ENCODE measurements at regions of chr9 and their contacts with region 1.

Region 1: GRCh38 chr9:77725820-77726219 is 77.7 kb upstream of the GNA14 start:
- DNase-seq: no peak
- H3K4me3 Mint-ChIP-seq: peak overlapping the region; percentile 5
- H3K27ac Mint-ChIP-seq: peak overlapping the region; percentile 71
- H3K4me1 Mint-ChIP-seq: peaks cover 33% of the 10 kb centered on the region
- H3K27me3 Mint-ChIP-seq: no peaks in the 10 kb centered on the region

Region 2: GRCh38 chr9:77605449-77606220 is 120.2 kb before region 1 on chr9:
- intact Hi-C with region 1: no loop called
- DNase-seq: no peak
- H3K4me3 Mint-ChIP-seq: no peak overlapping the region
- H3K27ac Mint-ChIP-seq: no peak overlapping the region
- H3K4me1 Mint-ChIP-seq: no peaks in the 10 kb centered on the region
- H3K27me3 Mint-ChIP-seq: peaks cover 13% of the 10 kb centered on the region

Region 3: DNA sequence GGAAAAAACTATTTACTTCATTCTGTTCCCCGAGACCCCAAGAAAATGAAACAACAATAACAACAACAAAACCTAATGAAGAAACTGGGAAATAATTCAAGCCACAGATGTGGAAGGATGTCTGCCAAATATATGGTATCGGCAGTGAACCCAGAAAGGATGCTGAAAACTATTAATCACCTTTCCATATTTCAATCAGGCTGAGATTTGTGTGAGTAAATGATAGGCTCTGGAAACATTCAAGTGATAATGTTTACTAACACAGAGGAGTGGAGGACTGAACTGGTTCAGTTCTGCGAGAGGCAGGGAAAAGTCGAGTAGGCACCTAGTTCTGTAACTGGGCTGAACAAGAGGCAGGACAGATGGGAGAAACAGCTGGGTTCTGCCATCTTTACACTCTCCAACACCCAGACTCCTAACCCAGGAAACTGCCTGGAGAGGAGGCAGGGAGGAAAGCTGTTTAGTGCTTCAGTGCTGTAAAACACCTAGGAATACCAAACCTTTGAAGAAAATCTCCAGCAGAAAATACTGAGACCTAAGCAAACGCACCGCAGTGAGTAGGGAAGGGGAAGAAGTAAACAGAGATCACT is 19.1 kb after region 1 on chr9:
- intact Hi-C with region 1: loop called (anchors 2 kb)
- DNase-seq: no peak
- H3K4me3 Mint-ChIP-seq: peak overlapping the region; percentile 35
- H3K27ac Mint-ChIP-seq: peak overlapping the region; percentile 68
- H3K4me1 Mint-ChIP-seq: peaks cover 41% of the 10 kb centered on the region
- H3K27me3 Mint-ChIP-seq: no peaks in the 10 kb centered on the region

Region 4: GRCh38 chr9:77802515-77803293 is 76.9 kb after region 1 on chr9:
- intact Hi-C with region 1: loop called (anchors 5 kb)
- DNase-seq: no peak
- H3K4me3 Mint-ChIP-seq: no peak overlapping the region
- H3K27ac Mint-ChIP-seq: no peak overlapping the region
- H3K4me1 Mint-ChIP-seq: peaks cover 34% of the 10 kb centered on the region
- H3K27me3 Mint-ChIP-seq: no peaks in the 10 kb centered on the region

Measured in activated T-helper 2 cell treated with anti-CD3 and anti-CD28 coated beads, Interferon-gamma antibody, Interleukin-2, Interleukin-4, amounts not matched to agents 10 μg/mL and 5 μg/mL and 100 μg/mL, durations not matched to agents 14 hours and 24 hours and 36 hours (primary cell).